AG04449 (cell line): ENCODE measurements at regions of chr1 and their contacts with region 1.

Region 1: GRCh38 chr1:201254625-201255506 is 28.4 kb upstream of the PKP1 start:
- DNase-seq: no peak
- H3K4me3 ChIP-seq: no peak overlapping the region
- CTCF ChIP-seq: peak; percentile 99

Region 2: DNA sequence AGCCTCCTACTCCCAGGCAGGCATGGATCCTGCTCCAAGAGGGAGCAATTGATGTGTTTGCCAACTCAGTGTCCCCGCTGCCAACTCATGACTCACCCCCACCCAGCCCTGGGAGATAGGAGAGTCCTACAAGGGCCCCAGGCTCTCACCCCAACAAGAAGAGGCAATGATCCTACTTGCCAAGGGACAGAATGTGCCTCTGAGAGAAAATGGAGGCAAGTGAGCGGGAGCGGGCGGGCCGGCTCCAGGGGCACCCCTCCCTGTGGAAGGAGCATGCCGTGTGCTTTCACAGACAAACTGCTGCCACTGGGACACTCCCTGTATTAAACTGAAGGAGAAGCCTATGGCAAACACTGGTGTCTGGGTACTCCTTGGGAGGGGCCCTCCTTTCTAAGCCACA is 45.1 kb after region 1 on chr1:
- CTCF ChIA-PET with region 1: interaction called, 10 read pairs
- POLR2A ChIA-PET with region 1: no interaction called
- DNase-seq: no peak
- H3K4me3 ChIP-seq: no peak overlapping the region
- CTCF ChIP-seq: no peak

Region 3: DNA sequence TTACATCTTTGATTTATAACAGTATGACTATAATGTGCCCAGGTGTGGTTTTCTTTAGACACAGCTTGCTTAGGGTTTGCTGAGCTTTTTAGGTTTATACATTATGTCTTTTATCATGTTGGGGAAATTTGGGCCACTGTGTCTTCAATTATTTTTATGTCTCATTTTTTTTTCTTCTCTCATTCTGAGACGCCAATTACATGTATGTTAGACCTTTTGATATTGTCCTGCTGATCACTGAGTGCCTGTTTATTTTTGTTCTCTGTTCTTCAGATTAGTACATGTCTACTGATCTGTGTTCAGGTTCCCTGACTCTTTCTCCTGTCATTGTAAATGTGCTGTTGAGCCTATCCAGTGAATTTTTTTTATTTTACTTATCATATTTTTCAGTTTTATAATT is 86.5 kb after region 1 on chr1:
- CTCF ChIA-PET with region 1: interaction called, 145 read pairs
- POLR2A ChIA-PET with region 1: no interaction called
- DNase-seq: no peak
- H3K4me3 ChIP-seq: no peak overlapping the region
- CTCF ChIP-seq: no peak

Region 4: GRCh38 chr1:201361652-201362504 is 107.0 kb after region 1 on chr1:
- CTCF ChIA-PET with region 1: interaction called, 349 read pairs
- POLR2A ChIA-PET with region 1: no interaction called
- DNase-seq: no peak
- H3K4me3 ChIP-seq: no peak overlapping the region
- CTCF ChIP-seq: peak; percentile 88

Region 5: DNA sequence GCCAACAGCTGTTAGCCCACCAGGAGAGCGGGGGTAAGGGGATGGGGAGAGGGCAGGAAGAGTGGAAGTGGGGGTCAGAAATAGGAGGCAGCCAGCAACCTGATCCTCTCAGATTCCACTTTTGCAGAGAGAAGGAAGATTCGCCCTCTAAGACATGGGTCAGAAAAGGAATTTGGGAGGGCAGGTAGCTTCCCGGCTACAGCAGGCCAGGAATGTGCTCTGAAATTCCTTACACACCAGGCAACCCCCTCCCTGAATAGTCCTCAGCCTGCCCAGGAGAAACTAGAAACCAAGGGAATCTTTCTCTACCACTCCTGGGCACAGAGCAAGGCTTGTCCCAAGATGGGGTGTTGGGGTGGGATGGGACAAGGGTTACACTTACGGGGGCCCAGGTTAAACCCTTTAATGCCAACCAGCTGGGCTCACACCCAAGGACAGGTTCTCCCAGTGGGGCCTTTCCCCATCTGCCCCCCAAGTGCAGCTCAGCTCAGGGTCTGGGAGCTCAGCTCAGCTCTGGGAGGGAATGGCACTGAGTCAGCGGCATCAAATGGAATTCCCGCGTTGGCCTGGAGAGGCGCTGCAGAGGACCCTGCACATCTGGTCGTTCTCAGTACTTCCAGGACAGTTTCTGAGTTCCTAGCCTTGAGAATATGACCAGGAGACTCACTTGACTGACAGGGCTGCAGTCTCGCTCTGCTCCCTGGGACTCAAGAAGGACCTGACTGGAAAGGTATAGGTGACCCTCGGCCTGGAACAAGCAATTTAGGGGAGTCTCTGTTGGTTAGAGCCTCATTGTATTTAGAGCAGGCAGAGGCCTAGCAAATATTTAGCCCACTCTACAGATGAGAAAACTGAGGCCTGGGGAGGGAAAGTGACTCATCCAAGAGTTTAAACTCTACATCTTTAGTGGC is 121.9 kb after region 1 on chr1:
- CTCF ChIA-PET with region 1: interaction called, 19 read pairs
- POLR2A ChIA-PET with region 1: no interaction called
- DNase-seq: no peak
- H3K4me3 ChIP-seq: no peak overlapping the region
- CTCF ChIP-seq: peak; percentile 83

Region 6: DNA sequence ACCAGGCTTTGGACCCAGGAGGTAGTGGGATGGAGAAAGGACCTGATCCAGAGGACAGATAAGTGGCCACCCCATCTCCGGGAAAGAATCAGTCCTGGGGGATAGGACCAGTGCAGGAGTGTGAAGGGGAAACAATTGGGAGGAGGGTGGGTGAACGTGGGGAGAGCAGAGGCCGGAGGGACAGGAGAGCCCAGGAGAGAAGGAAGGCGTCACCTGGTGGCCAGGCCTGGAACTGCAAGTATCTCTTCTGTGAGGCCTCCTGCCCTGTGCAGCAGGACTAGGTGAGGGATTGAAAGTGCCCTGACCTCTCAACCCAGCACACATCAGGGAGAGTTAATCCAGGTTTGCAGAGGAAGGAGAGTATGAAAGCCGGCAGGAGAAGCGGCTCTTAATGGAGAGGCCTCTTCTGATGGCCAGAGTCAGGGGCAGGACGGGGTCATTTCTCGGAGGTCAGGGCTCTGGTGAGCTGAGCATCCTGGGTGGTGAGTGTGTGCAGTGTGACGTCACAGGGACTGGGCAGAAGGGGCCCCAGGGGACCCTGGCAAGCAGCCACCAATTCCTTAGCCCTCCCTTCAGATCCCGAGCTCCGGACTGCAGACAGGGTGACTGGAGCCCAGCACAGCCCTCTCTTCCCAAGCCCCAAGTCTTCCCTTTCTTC is 153.4 kb after region 1 on chr1:
- CTCF ChIA-PET with region 1: interaction called, 36 read pairs
- POLR2A ChIA-PET with region 1: no interaction called
- DNase-seq: peak; percentile 10
- H3K4me3 ChIP-seq: no peak overlapping the region
- CTCF ChIP-seq: peak; percentile 99